ENCODE measurements at regions of chr19 and their contacts with region 1.

Region 1: GRCh38 chr19:53612755-53613154 is 19.0 kb upstream of the DPRX start:
- DNase-seq: peak; percentile 92 to 94
- H3K4me3 ChIP-seq: 0 out of 2 replicates have a peak overlapping the region, but pooled peaks have one; percentile 0
- H3K4me3 Mint-ChIP-seq: peak overlapping the region; percentile 60
- H3K27ac Mint-ChIP-seq: peak overlapping the region; percentile 96
- H3K4me1 ChIP-seq: peaks cover 37% of the 10 kb centered on the region
- H3K4me1 Mint-ChIP-seq: peaks cover 7% of the 10 kb centered on the region
- H3K27me3 ChIP-seq: no peaks in the 10 kb centered on the region
- H3K27me3 Mint-ChIP-seq: no peaks in the 10 kb centered on the region
- CTCF ChIP-seq: no peak

Region 2: DNA sequence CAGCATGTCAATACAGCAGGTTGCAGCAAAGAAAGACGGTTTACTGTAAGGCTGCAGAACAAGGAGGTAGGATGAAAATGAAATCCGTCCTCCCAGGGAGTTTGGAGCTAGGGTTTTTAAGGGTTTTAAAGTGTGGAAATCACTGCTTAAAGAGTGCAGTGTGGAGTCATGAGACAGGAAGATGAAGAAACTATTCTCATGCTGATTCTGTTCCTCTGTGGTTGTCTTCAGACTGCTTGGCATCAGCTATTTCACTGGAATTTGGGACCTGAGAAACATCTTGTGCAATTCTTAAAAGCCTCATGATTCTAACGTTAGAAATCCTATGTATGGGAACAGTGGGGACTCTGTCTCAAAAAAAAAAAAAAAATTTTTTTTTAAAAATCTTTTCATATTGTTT is 63.4 kb before region 1 on chr19:
- CTCF ChIA-PET with region 1: no interaction called
- POLR2A ChIA-PET with region 1: no interaction called
- intact Hi-C with region 1: no loop called
- DNase-seq: no peak
- H3K4me3 ChIP-seq: no peak overlapping the region
- H3K4me3 Mint-ChIP-seq: no peak overlapping the region
- H3K27ac Mint-ChIP-seq: no peak overlapping the region
- H3K4me1 ChIP-seq: no peaks in the 10 kb centered on the region
- H3K4me1 Mint-ChIP-seq: peaks cover 11% of the 10 kb centered on the region
- H3K27me3 ChIP-seq: no peaks in the 10 kb centered on the region
- H3K27me3 Mint-ChIP-seq: no peaks in the 10 kb centered on the region
- CTCF ChIP-seq: no peak

Region 3: GRCh38 chr19:53586277-53586691 is 26.5 kb before region 1 on chr19:
- CTCF ChIA-PET with region 1: no interaction called
- POLR2A ChIA-PET with region 1: no interaction called
- intact Hi-C with region 1: loop called (anchors 1 kb)
- DNase-seq: peak in 1 of 2 experiments; percentile 28
- H3K4me3 ChIP-seq: no peak overlapping the region
- H3K4me3 Mint-ChIP-seq: peak overlapping the region; percentile 17
- H3K27ac Mint-ChIP-seq: peak overlapping the region; percentile 85
- H3K4me1 ChIP-seq: peaks cover 4% of the 10 kb centered on the region; the same call in 1 of the 2 replicates
- H3K4me1 Mint-ChIP-seq: peaks cover 16% of the 10 kb centered on the region
- H3K27me3 ChIP-seq: no peaks in the 10 kb centered on the region
- H3K27me3 Mint-ChIP-seq: no peaks in the 10 kb centered on the region
- CTCF ChIP-seq: no peak

Region 4: DNA sequence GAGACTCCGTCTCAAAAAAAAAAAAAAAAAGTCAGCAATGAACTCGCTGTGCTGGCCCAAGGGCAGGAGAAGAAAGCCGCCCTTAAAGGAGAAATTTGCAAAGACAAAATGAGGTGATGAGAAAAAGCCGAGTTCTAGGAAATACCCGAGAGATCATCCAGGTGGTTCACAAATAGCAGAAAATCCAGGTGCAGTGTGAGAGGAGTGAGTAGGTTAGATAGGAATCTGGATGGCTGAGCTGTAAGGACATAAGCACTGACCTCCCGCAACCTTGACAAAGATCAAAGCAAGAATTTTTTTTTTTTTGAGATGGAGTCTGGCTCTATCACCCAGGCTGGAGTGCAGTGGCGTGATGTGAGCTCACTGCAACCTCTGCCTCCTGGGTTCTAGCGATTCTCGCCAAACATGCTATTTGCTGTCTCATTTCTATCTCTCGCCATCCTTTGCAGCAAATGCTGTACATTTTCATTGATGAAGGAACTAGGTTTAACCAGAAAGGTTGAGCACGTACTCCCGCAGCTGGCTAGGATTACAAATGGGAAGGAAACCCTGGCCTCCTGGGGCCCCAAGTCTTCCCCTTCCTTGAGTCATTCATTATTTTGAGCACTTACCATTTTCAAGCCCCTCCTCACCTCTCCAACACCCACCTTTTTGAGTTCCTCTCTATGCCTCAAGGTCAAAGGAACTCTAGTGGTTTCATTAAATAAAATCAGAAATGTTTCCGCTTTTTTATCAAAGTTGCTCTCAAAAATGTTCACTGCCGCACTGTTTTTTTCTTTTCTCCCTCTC is 172.5 kb after region 1 on chr19:
- CTCF ChIA-PET with region 1: no interaction called
- POLR2A ChIA-PET with region 1: no interaction called
- intact Hi-C with region 1: loop called (anchors 2 kb)
- DNase-seq: peak; percentile 81
- H3K4me3 ChIP-seq: peak overlapping the region; percentile 14; the same call in 1 of the 2 replicates
- H3K4me3 Mint-ChIP-seq: peak overlapping the region; percentile 89
- H3K27ac Mint-ChIP-seq: peak overlapping the region; percentile 89
- H3K4me1 ChIP-seq: peaks cover 41% of the 10 kb centered on the region
- H3K4me1 Mint-ChIP-seq: peaks cover 18% of the 10 kb centered on the region
- H3K27me3 ChIP-seq: no peaks in the 10 kb centered on the region
- H3K27me3 Mint-ChIP-seq: peaks cover 4% of the 10 kb centered on the region
- CTCF ChIP-seq: no peak

Region 5: GRCh38 chr19:54790711-54791110 is 1178.0 kb after region 1 on chr19:
- CTCF ChIA-PET with region 1: no interaction called
- POLR2A ChIA-PET with region 1: no interaction called
- intact Hi-C with region 1: no loop called
- DNase-seq: no peak
- H3K4me3 ChIP-seq: no peak overlapping the region
- H3K4me3 Mint-ChIP-seq: no peak overlapping the region
- H3K27ac Mint-ChIP-seq: no peak overlapping the region
- H3K4me1 ChIP-seq: no peaks in the 10 kb centered on the region
- H3K4me1 Mint-ChIP-seq: no peaks in the 10 kb centered on the region
- H3K27me3 ChIP-seq: no peaks in the 10 kb centered on the region; the same call in 1 of the 2 replicates
- H3K27me3 Mint-ChIP-seq: peaks cover 29% of the 10 kb centered on the region
- CTCF ChIP-seq: no peak